ENCODE measurements at regions of chr7 and their contacts with region 1.

Region 1: DNA sequence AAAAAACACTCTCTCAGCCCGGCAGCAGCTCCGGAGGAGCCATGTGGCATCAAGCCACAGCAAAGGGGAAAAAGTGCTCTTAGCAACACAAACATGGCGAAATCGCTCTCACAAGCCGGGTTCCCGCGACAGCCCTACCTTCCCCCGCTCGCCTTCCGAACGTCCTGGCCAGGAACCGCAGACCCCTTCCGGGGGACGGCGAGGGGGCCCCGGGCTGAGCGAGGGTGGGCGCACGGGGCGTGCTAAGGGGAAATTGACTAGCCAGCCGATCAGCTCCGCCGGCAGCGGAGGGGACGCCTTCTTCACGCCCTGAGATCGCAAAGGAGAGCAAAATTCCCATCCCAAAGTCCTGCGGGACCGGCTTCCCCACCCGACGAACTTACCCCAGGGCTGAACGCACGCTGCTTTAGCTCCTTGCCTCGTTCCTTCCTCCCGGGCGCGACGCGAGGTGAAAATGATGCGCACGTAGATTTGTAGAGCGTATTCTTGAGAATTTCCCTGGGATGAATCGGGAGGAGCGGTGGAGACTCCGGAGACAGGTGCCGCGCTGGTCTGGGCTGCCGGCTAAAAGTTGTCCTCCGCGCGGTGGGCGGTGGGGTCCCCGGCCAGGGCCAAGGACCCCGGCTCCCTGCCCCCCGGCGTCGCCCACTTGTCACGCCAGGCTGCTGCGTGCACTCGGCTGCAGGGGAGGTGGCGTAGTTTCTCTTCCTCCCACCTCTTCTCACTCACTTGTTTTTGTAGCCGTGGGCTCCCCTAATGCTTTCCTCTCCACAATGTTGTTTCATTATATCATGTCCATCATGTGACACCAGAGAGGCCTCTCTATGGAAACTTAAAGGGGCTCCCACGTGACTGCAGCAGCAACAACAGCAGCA is 220.1 kb upstream of the MKLN1 start:
- DNase-seq: peak in 9 of 10 donors; percentile 80 to 89 (median 83)
- H3K4me3 ChIP-seq: peak overlapping the region; percentile 66 to 100 (median 99)
- H3K27ac ChIP-seq: peak overlapping the region; percentile 96 to 100 (median 100)
- H3K27me3 ChIP-seq: no peaks in the 10 kb centered on the region
- CTCF ChIP-seq: peak in 28 of 56 donors; percentile 5 to 43 (median 25)

Region 2: GRCh38 chr7:130838738-130839137 is 268.8 kb before region 1 on chr7:
- intact Hi-C with region 1: no loop called
- DNase-seq: no peak
- H3K4me3 ChIP-seq: no peak overlapping the region
- H3K27ac ChIP-seq: no peak overlapping the region
- H3K27me3 ChIP-seq: no peaks in the 10 kb centered on the region
- CTCF ChIP-seq: no peak

Region 3: GRCh38 chr7:131071786-131072504 is 35.6 kb before region 1 on chr7:
- intact Hi-C with region 1: loop called (anchors 2 to 5 kb)
- DNase-seq: peak in 2 of 10 donors; percentile 49 to 67
- H3K4me3 ChIP-seq: peak overlapping the region in 47 of 59 donors; percentile 2 to 52 (median 29)
- H3K27ac ChIP-seq: peak overlapping the region; percentile 21 to 92 (median 75)
- H3K27me3 ChIP-seq: no peaks in the 10 kb centered on the region
- CTCF ChIP-seq: peak in 55 of 56 donors; percentile 28 to 67 (median 51)

Region 4: GRCh38 chr7:131219312-131220041 is 111.9 kb after region 1 on chr7:
- intact Hi-C with region 1: loop called (anchors 2 to 10 kb)
- DNase-seq: peak; percentile 24 to 80 (median 64)
- H3K4me3 ChIP-seq: peak overlapping the region in 32 of 59 donors; percentile 0 to 44 (median 19)
- H3K27ac ChIP-seq: peak overlapping the region; percentile 40 to 94 (median 85)
- H3K27me3 ChIP-seq: no peaks in the 10 kb centered on the region
- CTCF ChIP-seq: peak in 12 of 56 donors; percentile 2 to 28 (median 10)

Region 5: DNA sequence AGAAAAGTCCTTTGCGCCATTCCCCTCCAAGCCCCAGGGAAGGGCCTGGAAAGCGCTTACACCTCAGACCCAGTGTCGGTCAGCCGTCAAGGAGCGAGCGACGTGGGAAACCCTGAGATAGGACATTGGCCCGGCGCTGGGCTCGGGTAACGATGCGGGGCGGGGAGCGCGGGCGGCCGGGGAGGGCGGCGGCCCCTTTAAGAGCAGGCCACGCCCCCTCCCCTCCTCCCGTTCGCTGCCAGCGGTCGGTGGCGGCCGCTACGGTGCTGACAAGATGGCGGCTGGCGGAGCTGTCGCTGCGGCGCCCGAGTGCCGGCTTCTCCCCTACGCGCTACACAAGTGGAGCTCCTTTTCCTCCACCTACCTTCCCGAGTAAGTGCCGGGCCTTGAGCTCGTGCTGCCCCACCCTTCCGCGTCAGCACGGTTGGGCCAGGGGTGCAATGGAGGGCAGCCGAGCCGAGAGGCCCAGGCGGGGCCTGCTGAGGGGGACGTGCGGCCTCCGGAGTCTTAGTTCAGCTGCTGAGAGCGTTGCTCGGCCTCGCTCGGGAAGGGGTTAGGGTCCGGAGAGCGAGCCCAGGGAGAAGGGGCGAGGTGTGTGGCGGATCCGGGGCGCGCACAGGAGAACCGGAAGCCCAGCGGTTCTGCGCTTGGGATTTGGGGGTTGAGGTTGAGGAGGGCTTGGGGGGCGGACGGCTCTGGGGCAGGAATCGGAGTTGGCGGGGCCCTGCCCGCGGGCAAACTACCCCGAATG is 220.2 kb after region 1 on chr7 and contains the start of gene MKLN1:
- intact Hi-C with region 1: loop called (anchors 5 kb)
- DNase-seq: peak; percentile 82 to 94 (median 89)
- H3K4me3 ChIP-seq: peak within 1 kb of the TSS; percentile 63 to 100 (median 94)
- H3K27ac ChIP-seq: peak within 1 kb of the TSS; percentile 89 to 100 (median 98)
- H3K27me3 ChIP-seq: no peaks in the 10 kb centered on the region
- CTCF ChIP-seq: peak in 22 of 56 donors; percentile 6 to 53 (median 24)
- total RNA-seq, gene MKLN1: 68.7 to 162 (median 107) TPM

Region 6: GRCh38 chr7:131507592-131508331 is 400.2 kb after region 1 on chr7:
- intact Hi-C with region 1: loop called (anchors 5 kb)
- DNase-seq: peak; percentile 83 to 93 (median 88)
- H3K4me3 ChIP-seq: peak overlapping the region in 22 of 59 donors; percentile 6 to 39 (median 24)
- H3K27ac ChIP-seq: peak overlapping the region in 15 of 59 donors; percentile 2 to 75 (median 14)
- H3K27me3 ChIP-seq: no peaks in the 10 kb centered on the region
- CTCF ChIP-seq: peak; percentile 79 to 98 (median 95)

Measured in dorsolateral prefrontal cortex (tissue), 120 donors.